ENCODE measurements at regions of chr14 and their contacts with region 1.

Region 1: GRCh38 chr14:60164712-60165546 is at the start of gene DHRS7:
- DNase-seq: peak; percentile 88 to 96 (median 95)
- ATAC-seq: peak; percentile 99 to 100
- H3K4me3 ChIP-seq: peak within 1 kb of the TSS; percentile 74
- H3K27ac ChIP-seq: peak within 1 kb of the TSS; percentile 80
- H3K4me1 ChIP-seq: peaks cover 5% of the 10 kb centered on the region
- H3K27me3 ChIP-seq: no peaks in the 10 kb centered on the region
- total RNA-seq, gene DHRS7: 40.0 to 48.8 (median 43.5) TPM

Region 2: DNA sequence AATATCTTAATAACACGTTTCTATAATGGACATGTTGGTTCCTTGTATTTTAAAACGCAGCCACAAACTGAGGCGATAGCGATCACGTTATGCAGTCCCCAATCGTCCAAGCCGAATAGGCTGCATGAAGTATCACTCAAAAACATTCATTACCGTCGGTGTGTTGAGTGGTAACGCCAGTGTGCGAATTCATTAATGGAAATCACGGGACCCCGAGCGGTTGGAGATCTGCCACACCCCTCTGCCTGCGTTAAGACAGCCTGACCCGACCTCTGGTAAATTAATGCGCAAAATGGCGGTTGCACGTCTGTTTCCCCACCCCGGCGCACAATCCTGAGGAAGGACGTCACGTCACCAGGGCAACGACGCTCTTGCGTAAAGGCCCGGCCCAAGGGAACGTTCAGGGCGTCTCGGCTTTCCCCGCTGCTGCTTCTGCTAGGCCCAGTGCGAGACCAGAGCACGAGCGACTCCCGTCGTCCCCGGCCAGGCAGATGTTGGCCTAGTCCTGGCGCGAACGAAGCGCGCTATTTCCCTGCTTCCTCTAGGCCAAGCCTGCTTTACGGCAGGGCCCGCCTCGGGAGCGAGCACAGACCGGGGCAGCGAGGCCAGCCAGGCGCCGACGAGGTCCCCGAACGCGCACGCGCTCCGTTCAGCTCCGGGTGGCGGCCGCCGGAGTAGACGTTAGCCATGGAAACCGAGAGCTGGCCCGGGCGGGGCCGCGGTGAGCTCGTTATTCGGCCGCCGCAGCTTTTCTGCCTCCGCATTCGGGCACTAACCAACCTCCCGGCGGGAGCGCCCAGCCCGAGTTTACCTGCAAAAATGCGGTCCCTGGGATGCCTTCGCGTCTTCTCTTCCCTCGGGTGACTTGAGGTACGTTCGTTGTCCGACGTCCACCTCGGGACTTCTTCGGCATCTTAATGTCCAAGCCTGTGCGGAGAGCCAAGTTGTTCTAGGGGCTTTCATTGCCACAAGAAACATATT is 73.1 kb before region 1 on chr14 and contains the start of gene PCNX4:
- intact Hi-C with region 1: loop called in 2 of 4 experiments (anchors 10 kb)
- DNase-seq: peak; percentile 97 to 99 (median 98)
- ATAC-seq: peak; percentile 99
- H3K4me3 ChIP-seq: peak within 1 kb of the TSS; percentile 85
- H3K27ac ChIP-seq: peak within 1 kb of the TSS; percentile 68
- H3K4me1 ChIP-seq: peaks cover 9% of the 10 kb centered on the region
- H3K27me3 ChIP-seq: no peaks in the 10 kb centered on the region
- total RNA-seq, gene PCNX4: 29.7 to 41.3 (median 33.0) TPM